ENCODE measurements at regions of chr3 and their contacts with region 1.

Region 1: DNA sequence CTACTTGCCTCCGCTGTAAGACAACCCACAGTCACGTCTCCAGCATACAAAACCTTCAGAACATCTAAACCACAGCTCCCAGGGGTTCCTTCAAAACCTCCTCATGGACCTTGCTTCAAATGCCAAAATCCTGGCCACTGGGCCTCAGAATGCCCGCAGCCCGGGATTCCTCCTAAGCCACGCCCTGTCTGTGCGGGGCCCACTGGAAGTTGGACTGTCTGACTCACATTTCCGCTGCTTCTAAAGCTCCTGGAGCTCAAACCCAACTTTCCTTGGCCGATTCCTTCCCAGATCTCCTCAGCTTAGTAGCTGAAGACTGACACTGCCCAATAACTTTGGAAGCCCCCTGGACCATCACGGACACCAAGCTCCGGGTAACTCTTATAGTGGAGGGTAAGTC is 17.9 kb upstream of the OR5H6 start:
- DNase-seq: no peak
- H3K4me3 ChIP-seq: no peak overlapping the region
- H3K27ac ChIP-seq: no peak overlapping the region
- H3K4me1 ChIP-seq: no peaks in the 10 kb centered on the region
- H3K27me3 ChIP-seq: no peaks in the 10 kb centered on the region
- CTCF ChIP-seq: no peak
- POLR2A ChIP-seq: no peak

Region 2: DNA sequence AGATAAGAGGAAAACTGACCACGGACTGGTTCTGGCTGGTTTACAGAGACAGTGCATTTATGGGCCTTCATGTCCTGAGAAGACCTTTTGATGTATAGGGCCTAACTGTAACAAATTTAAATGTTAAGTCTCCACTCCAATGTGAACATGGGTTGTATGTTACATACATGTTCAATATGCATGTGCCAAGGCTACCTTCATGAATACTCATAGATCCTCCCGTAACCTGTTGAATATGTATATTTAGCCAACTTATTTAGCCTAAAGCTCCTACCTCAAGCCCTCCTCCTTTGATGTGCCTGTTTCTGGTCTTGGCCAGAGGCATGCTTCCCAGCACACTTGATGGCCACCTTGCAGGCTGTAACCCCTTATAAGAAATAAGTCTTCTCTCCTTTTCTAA is 36.1 kb after region 1 on chr3 and contains the start of gene OR5H2:
- intact Hi-C with region 1: loop called (anchors 5 kb)
- DNase-seq: no peak
- H3K4me3 ChIP-seq: no peak within 1 kb of the TSS
- H3K27ac ChIP-seq: no peak within 1 kb of the TSS
- H3K4me1 ChIP-seq: no peaks in the 10 kb centered on the region
- H3K27me3 ChIP-seq: no peaks in the 10 kb centered on the region
- CTCF ChIP-seq: no peak
- POLR2A ChIP-seq: no peak
- total RNA-seq, gene OR5H2: not detected

Measured in prostate gland (tissue), 2 donors.